Naive thymus-derived CD4-positive, alpha-beta T cell (primary cell): ENCODE measurements at regions of chr17 and their contacts with region 1.

Region 1: DNA sequence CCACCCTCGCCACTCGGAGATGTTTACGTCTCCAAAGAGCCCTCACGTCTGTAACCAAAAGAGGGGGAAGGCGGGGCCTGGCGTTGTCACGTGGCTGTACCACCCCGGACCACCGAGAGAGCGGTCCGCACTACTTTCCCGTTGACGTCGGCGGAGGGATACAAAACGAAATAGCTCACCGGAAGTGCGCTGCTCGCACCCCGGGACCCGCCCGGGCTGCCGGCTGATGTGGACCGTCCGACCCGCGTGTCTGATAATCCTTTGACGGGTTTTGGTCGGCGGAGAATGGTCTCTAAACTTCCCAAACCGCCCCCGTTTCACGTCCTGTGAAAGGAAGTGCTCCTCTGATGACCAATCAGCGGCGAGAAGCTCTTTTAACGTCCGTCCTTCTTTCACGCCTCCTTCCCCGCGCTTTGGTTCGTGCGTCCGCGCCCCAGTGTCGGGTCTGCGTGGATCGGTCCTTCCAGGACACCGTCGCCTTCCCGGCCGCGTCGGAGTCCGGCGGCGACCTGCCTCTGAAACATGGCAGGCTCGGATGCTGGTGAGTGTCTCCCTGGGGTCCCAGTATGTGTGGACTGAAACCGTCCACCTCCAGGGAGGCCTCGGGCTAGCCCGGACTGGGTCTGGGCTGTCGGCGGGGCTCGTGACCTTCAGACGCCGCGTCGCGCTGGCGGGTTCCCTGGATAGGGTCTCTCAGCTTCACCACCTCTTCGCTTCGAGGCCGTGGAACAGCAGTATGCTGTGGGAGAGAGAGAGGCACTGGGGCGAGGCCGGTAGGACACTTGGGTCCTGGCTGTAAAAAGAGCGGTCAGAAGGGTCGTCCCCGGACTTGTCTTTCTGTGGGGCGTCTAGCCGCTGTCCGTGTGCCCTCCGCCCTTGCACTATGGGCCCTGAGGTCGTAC is at the start of gene CEP95:
- DNase-seq: peak in 7 of 9 donors; percentile 85 to 98 (median 97)
- ATAC-seq: peak; percentile 78
- H3K4me3 ChIP-seq: peak within 1 kb of the TSS; percentile 98
- H3K4me3 Mint-ChIP-seq: peak within 1 kb of the TSS; percentile 97 to 100 (median 99)
- H3K27ac ChIP-seq: peak within 1 kb of the TSS; percentile 100
- H3K27ac Mint-ChIP-seq: peak within 1 kb of the TSS; percentile 99 to 100 (median 100)
- H3K4me1 ChIP-seq: peaks cover 41 to 42% of the 10 kb centered on the region in 2 donors
- H3K4me1 Mint-ChIP-seq: peaks cover 31 to 84% (median 70%) of the 10 kb centered on the region in 7 donors
- H3K27me3 ChIP-seq: no peaks in the 10 kb centered on the region
- H3K27me3 Mint-ChIP-seq: peaks cover 0 to 11% (median 0%) of the 10 kb centered on the region in 5 donors
- total RNA-seq, gene CEP95: 46.7 to 192 (median 115) TPM

Region 2: GRCh38 chr17:63653050-63653449 is 853.8 kb before region 1 on chr17:
- CTCF ChIA-PET with region 1: no interaction called
- POLR2A ChIA-PET with region 1: no interaction called
- intact Hi-C with region 1: no loop called
- DNase-seq: no peak
- ATAC-seq: no peak
- H3K4me3 ChIP-seq: no peak overlapping the region
- H3K4me3 Mint-ChIP-seq: no peak overlapping the region
- H3K27ac ChIP-seq: no peak overlapping the region
- H3K27ac Mint-ChIP-seq: peak overlapping the region in 1 of 9 donors; percentile 16
- H3K4me1 ChIP-seq: peaks cover 0 to 4% of the 10 kb centered on the region in 2 donors
- H3K4me1 Mint-ChIP-seq: peaks cover 6 to 17% (median 14%) of the 10 kb centered on the region in 7 donors
- H3K27me3 ChIP-seq: no peaks in the 10 kb centered on the region
- H3K27me3 Mint-ChIP-seq: no peaks in the 10 kb centered on the region

Region 3: DNA sequence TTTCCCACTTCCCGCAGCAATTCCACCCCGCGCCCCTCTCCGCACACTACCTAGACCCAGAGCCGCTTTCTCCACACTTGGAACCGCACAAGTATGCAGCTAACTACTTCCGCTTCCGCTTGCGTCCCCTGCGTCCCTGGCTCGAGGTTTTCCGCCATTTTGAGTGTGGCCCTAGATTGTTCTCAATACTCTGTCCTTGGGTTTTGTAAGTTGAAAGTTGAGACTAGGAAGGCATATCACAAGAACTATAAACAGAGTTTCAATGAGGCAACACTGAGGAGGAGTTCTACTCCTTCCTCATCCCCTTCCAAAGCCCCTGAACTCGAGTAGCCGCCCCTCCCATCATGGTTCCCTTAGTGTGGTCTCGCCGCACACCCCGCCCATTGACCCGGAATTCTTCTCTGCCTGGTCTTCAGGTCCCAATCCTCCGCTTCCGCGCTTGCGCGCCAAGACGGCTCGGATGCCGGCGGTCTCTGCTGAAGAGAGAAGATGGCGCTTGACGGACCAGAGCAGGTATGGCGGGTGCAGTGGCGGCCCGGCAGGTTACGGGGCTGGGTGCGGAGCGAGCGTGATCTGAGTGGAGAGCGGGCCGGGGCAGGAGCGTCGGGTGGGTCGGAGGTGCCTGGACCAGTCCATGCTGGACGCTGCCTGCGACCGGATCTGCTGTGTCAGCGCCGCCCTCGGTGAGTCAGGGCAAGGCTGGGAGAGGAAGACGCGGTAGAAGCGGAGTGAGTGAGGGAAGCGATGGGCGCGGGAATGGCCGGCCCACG is 679.6 kb before region 1 on chr17 and contains the starts of genes FTSJ3 and PSMC5:
- CTCF ChIA-PET with region 1: no interaction called
- POLR2A ChIA-PET with region 1: interaction called, 4 read pairs
- intact Hi-C with region 1: loop called (anchors 1 to 5 kb)
- DNase-seq: peak; percentile 89 to 98 (median 96)
- ATAC-seq: peak; percentile 97
- H3K4me3 ChIP-seq: peak within 1 kb of the TSS; percentile 89
- H3K4me3 Mint-ChIP-seq: peak within 1 kb of the TSS; percentile 93 to 100 (median 98)
- H3K27ac ChIP-seq: peak within 1 kb of the TSS; percentile 87
- H3K27ac Mint-ChIP-seq: peak within 1 kb of the TSS; percentile 98 to 100 (median 99)
- H3K4me1 ChIP-seq: peaks cover 27 to 46% of the 10 kb centered on the region in 2 donors
- H3K4me1 Mint-ChIP-seq: peaks cover 43 to 82% (median 77%) of the 10 kb centered on the region in 7 donors
- H3K27me3 ChIP-seq: no peaks in the 10 kb centered on the region
- H3K27me3 Mint-ChIP-seq: no peaks in the 10 kb centered on the region
- total RNA-seq, gene FTSJ3: 38.1 to 66.2 (median 55.8) TPM
- total RNA-seq, gene PSMC5: 68.4 to 153 (median 105) TPM

Region 4: DNA sequence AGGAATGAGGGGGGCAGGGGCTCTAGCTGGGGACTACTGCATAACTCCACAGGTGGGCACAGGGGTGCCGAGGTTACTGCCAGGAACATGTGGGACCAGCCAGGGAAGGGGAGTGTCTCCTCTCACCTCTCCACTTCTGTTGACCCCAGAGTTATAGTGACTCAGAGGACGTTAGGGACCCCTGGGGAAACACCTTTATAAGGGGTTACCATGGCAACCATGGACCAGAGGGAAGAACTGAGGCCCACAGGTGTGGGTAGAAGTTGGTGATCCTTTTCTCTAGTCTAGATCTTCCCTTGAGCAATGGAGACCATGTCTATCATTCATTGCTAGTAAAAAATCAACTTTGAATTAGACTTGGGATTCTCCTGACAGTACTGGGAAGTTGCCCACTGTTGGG is 630.0 kb before region 1 on chr17:
- CTCF ChIA-PET with region 1: no interaction called
- POLR2A ChIA-PET with region 1: no interaction called
- intact Hi-C with region 1: no loop called
- DNase-seq: no peak
- ATAC-seq: no peak
- H3K4me3 ChIP-seq: no peak overlapping the region
- H3K4me3 Mint-ChIP-seq: no peak overlapping the region
- H3K27ac ChIP-seq: no peak overlapping the region
- H3K27ac Mint-ChIP-seq: no peak overlapping the region
- H3K4me1 ChIP-seq: no peaks in the 10 kb centered on the region
- H3K4me1 Mint-ChIP-seq: peaks cover 0 to 2% (median 0%) of the 10 kb centered on the region in 7 donors
- H3K27me3 ChIP-seq: no peaks in the 10 kb centered on the region
- H3K27me3 Mint-ChIP-seq: peaks cover 0 to 3% (median 0%) of the 10 kb centered on the region in 5 donors

Region 5: GRCh38 chr17:64145757-64146417 is 360.9 kb before region 1 on chr17:
- CTCF ChIA-PET with region 1: no interaction called
- POLR2A ChIA-PET with region 1: interaction called, 30 read pairs
- intact Hi-C with region 1: loop called (anchors 1 to 2 kb)
- DNase-seq: peak; percentile 85 to 99 (median 96)
- ATAC-seq: peak; percentile 98
- H3K4me3 ChIP-seq: peak overlapping the region; percentile 72
- H3K4me3 Mint-ChIP-seq: no peak overlapping the region
- H3K27ac ChIP-seq: peak overlapping the region; percentile 91
- H3K27ac Mint-ChIP-seq: no peak overlapping the region
- H3K4me1 ChIP-seq: peaks cover 11 to 12% of the 10 kb centered on the region in 2 donors
- H3K4me1 Mint-ChIP-seq: peaks cover 11 to 34% (median 27%) of the 10 kb centered on the region in 7 donors
- H3K27me3 ChIP-seq: no peaks in the 10 kb centered on the region
- H3K27me3 Mint-ChIP-seq: no peaks in the 10 kb centered on the region

Region 6: GRCh38 chr17:64369007-64369893 is 137.6 kb before region 1 on chr17:
- CTCF ChIA-PET with region 1: no interaction called
- POLR2A ChIA-PET with region 1: no interaction called
- intact Hi-C with region 1: no loop called
- DNase-seq: no peak
- ATAC-seq: no peak
- H3K4me3 ChIP-seq: no peak overlapping the region
- H3K4me3 Mint-ChIP-seq: no peak overlapping the region
- H3K27ac ChIP-seq: no peak overlapping the region
- H3K27ac Mint-ChIP-seq: peak overlapping the region in 7 of 9 donors; percentile 11 to 84 (median 51)
- H3K4me1 ChIP-seq: no peaks in the 10 kb centered on the region
- H3K4me1 Mint-ChIP-seq: peaks cover 0 to 28% (median 6%) of the 10 kb centered on the region in 7 donors
- H3K27me3 ChIP-seq: no peaks in the 10 kb centered on the region
- H3K27me3 Mint-ChIP-seq: no peaks in the 10 kb centered on the region

Region 7: GRCh38 chr17:64455993-64456885 is 50.6 kb before region 1 on chr17:
- CTCF ChIA-PET with region 1: no interaction called
- POLR2A ChIA-PET with region 1: interaction called, 39 read pairs
- intact Hi-C with region 1: no loop called
- DNase-seq: peak in 6 of 9 donors; percentile 7 to 47 (median 39)
- ATAC-seq: peak; percentile 72
- H3K4me3 ChIP-seq: no peak overlapping the region
- H3K4me3 Mint-ChIP-seq: peak overlapping the region in 9 of 10 donors; percentile 43 to 82 (median 64)
- H3K27ac ChIP-seq: peak overlapping the region; percentile 43
- H3K27ac Mint-ChIP-seq: peak overlapping the region; percentile 64 to 96 (median 89)
- H3K4me1 ChIP-seq: peaks cover 5 to 10% of the 10 kb centered on the region in 2 donors
- H3K4me1 Mint-ChIP-seq: peaks cover 17 to 46% (median 35%) of the 10 kb centered on the region in 7 donors
- H3K27me3 ChIP-seq: no peaks in the 10 kb centered on the region
- H3K27me3 Mint-ChIP-seq: peaks cover 0 to 2% (median 0%) of the 10 kb centered on the region in 5 donors

Region 8: DNA sequence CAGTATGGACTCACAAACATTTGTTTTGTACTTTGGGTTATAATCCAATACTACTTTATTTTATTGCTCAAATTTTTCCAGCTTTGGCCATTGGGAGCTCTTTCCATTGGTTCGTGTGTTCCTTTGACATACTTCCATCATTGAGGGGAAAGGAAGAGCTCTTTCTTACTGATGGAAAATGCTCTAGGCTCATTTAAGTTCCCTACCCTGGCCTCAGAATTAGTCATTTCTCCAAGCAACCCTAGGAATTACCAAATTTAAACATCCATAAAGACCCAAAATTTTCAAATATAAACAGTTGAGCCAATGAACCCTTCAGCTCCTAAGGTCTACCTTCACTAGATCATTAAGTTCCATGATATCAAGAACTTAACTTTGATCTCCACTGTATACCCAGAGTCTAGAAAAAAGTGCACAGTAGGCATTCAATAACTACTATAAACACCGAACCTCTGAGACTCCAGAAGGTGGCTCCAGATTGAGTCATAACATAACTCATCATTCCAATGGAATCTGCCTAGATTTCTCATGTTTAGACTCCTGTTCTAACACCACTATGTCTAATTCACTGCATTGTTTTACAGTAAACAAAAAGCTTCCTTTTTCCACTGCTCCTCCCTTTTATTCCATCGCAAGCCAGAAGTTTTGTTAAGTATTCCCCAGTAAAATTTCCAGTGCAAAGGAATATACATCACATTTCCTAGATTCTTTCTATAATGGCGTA is 116.3 kb after region 1 on chr17:
- CTCF ChIA-PET with region 1: no interaction called
- POLR2A ChIA-PET with region 1: no interaction called
- intact Hi-C with region 1: no loop called
- DNase-seq: no peak
- ATAC-seq: no peak
- H3K4me3 ChIP-seq: no peak overlapping the region
- H3K4me3 Mint-ChIP-seq: no peak overlapping the region
- H3K27ac ChIP-seq: no peak overlapping the region
- H3K27ac Mint-ChIP-seq: peak overlapping the region in 2 of 9 donors; percentile 25 to 42
- H3K4me1 ChIP-seq: peaks cover 0 to 7% of the 10 kb centered on the region in 2 donors
- H3K4me1 Mint-ChIP-seq: peaks cover 10 to 48% (median 35%) of the 10 kb centered on the region in 7 donors
- H3K27me3 ChIP-seq: no peaks in the 10 kb centered on the region
- H3K27me3 Mint-ChIP-seq: no peaks in the 10 kb centered on the region

Region 9: DNA sequence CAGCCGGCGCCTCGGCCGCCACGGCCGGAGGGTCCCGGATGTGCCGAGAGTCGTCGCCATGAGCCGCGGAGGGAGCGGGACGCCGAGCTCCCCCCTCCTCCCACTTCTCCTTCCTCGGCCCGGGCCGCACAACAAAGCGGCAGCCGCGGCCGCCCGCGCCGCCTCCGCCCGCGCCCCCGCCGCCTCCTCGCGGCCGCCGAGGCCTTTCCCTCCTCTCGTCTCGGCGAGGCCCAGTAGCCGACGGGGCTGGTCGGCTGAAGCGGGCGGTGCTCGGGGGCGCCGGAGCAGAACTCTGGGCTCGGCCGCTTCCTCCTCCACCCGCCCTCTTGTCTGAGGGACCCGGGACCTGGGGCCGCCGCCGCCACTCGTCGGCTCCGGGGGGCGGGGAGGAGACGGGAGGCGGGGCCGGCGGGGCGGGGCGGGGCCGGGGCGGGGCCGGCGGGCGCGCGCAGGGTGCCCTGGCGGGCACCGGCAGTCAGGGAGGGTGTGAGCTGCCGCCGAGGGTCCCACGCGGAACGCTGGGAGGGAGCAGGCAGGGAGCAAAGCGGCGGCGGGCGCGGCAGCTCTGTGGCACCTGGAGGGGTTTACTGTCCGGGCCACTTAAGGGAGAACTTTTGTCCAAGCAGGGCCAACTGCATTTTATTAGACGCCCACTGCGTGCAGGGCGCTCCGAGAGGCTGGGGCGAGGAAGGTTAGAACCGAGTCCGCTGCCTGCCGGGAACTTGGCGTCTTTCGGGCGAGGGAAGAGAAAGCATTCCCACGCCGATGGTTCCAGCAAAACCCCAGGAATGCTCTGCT is 155.3 kb after region 1 on chr17 and contains the start of gene SMURF2:
- CTCF ChIA-PET with region 1: no interaction called
- POLR2A ChIA-PET with region 1: interaction called, 22 read pairs
- intact Hi-C with region 1: loop called (anchors 1 to 2 kb)
- DNase-seq: peak; percentile 72 to 84 (median 80)
- ATAC-seq: peak; percentile 96
- H3K4me3 ChIP-seq: peak within 1 kb of the TSS; percentile 77
- H3K4me3 Mint-ChIP-seq: peak within 1 kb of the TSS; percentile 87 to 99 (median 98)
- H3K27ac ChIP-seq: peak within 1 kb of the TSS; percentile 72
- H3K27ac Mint-ChIP-seq: peak within 1 kb of the TSS; percentile 85 to 96 (median 95)
- H3K4me1 ChIP-seq: peaks cover 12 to 18% of the 10 kb centered on the region in 2 donors
- H3K4me1 Mint-ChIP-seq: peaks cover 28 to 42% (median 34%) of the 10 kb centered on the region in 7 donors
- H3K27me3 ChIP-seq: no peaks in the 10 kb centered on the region
- H3K27me3 Mint-ChIP-seq: no peaks in the 10 kb centered on the region
- total RNA-seq, gene SMURF2: 17.0 to 35.7 (median 32.1) TPM

Region 10: DNA sequence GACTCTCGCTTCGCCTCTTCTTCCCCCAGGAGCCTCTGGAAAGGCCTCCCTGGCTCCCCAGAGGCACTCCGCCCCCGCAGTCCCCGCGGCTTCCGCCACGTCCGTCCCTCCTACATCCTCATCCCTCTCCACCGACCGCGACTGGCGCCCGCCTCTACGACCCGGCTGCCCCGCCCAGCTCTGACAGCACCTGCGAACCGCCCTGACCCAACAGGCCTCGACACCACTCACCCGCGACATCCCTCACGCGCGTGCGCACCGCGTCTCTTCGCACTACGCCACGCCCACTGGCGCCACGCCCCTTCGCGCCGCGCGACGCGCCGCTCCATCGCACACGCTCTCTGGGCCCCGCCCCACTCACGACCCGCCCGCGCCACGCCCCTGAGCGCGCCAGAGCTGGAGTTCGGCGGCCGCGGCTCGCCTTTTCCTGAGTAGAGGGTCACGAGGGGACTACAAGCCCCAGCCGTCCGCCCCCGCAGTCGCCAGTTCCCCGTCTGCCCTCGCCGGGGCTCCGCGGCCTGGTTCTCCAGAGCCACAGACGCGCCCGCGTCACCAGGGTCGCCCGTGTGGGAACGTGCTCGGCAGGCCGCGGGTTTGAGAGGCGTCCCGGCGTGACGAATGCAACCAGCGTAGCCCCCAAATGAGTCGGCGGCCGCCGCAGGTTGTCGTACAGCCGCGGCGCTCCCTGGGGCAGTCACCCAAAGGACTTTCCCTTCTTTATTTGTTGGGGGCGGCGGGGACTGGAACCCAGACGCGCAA is 468.7 kb after region 1 on chr17:
- CTCF ChIA-PET with region 1: no interaction called
- POLR2A ChIA-PET with region 1: no interaction called
- intact Hi-C with region 1: loop called in 1 of 2 experiments (anchors 5 kb)
- DNase-seq: peak; percentile 94 to 99 (median 98)
- ATAC-seq: peak; percentile 92
- H3K4me3 ChIP-seq: peak overlapping the region; percentile 82
- H3K4me3 Mint-ChIP-seq: peak overlapping the region; percentile 88 to 100 (median 96)
- H3K27ac ChIP-seq: peak overlapping the region; percentile 99
- H3K27ac Mint-ChIP-seq: peak overlapping the region; percentile 96 to 100 (median 99)
- H3K4me1 ChIP-seq: peaks cover 8 to 27% of the 10 kb centered on the region in 2 donors
- H3K4me1 Mint-ChIP-seq: peaks cover 19 to 50% (median 33%) of the 10 kb centered on the region in 7 donors
- H3K27me3 ChIP-seq: no peaks in the 10 kb centered on the region
- H3K27me3 Mint-ChIP-seq: no peaks in the 10 kb centered on the region